B cell (primary cell): ENCODE measurements at regions of chr7 and their contacts with region 1.

Region 1: DNA sequence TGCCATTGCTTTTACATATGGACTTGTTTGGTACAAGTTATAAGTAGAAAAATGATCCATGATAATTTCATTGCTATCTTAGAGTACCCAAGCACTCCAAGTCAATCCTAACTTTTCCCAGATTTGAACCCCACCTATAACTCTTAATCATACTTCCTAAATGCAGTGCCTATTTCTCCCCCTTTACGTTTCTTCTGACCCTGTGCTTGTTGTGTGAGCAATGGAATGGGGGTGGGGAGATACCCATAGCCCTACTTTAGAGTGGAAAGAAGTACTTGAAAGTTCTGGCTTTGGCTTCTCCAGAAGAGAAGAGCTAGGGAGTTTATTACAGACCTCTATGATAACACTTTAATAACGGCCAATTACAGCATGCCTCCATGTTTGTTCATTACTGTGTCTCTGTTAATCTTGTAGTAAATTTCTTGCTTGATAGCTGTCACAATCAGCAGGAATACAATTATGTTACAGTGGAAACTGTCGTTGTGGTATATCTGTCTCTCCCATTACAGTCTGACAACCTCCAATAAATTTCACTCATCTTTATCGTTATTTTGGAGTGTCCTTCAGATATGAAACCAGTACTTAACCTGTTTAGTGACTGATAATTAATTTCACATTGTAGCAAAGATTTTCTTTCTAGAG is 34.0 kb downstream of the CNPY1 start:
- DNase-seq: no peak
- ATAC-seq: no peak
- H3K4me3 ChIP-seq: no peak overlapping the region
- H3K4me3 Mint-ChIP-seq: no peak overlapping the region
- H3K27ac ChIP-seq: no peak overlapping the region
- H3K27ac Mint-ChIP-seq: no peak overlapping the region
- H3K4me1 ChIP-seq: peaks cover 12 to 22% of the 10 kb centered on the region in 2 donors
- H3K4me1 Mint-ChIP-seq: peaks cover 11% of the 10 kb centered on the region
- H3K27me3 ChIP-seq: peaks cover 2 to 54% (median 47%) of the 10 kb centered on the region in 4 experiments
- H3K27me3 Mint-ChIP-seq: peaks cover 69% of the 10 kb centered on the region
- CTCF ChIP-seq: no peak

Region 2: DNA sequence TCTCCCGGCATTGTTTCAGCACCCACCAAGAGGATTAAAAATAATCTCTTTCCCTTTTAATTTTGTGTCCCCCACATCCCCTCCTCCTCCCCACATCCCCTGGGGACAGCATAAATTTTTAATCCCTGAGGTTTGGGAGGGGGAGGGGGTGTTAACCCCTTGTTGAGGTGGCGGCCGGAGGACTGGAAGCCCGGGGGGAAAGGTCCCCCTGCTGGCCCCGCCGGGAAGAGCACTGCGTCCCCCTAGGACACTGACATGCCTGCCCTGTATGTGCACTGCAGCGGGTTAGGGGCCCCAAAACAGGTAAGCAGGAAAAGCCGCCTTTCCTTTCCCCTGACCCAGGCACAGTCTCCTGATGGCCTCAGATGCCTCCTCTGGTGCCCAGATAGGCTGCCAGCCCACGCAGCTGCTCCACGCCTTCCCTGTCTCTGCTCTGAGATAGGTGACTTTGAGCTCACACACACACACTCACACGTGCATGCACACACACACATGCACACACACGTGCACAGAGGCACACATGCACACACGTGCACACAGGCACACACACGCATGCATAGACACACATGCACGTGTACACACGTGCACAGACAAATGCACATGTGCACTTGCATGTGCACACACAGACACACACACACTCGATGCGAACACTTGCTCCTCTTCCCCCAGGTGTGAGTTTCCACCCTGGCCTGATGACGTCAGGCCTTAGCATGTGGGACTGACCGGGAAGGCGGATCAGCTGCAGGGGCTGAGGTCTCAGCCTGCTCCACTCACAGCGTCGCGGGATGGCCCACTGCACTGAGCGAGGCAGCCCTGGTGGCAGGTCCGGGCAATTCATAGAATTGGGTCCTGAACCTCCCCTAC is 21.7 kb after region 1 on chr7:
- CTCF ChIA-PET with region 1: no interaction called
- POLR2A ChIA-PET with region 1: no interaction called
- intact Hi-C with region 1: loop called (anchors 2 kb)
- DNase-seq: peak; percentile 55
- ATAC-seq: peak; percentile 51
- H3K4me3 ChIP-seq: peak overlapping the region in 4 of 5 experiments; percentile 3 to 55 (median 35)
- H3K4me3 Mint-ChIP-seq: peak overlapping the region; percentile 70
- H3K27ac ChIP-seq: no peak overlapping the region
- H3K27ac Mint-ChIP-seq: no peak overlapping the region
- H3K4me1 ChIP-seq: peaks cover 13 to 18% of the 10 kb centered on the region in 2 donors
- H3K4me1 Mint-ChIP-seq: peaks cover 18% of the 10 kb centered on the region
- H3K27me3 ChIP-seq: peaks cover 0 to 67% (median 30%) of the 10 kb centered on the region in 4 experiments
- H3K27me3 Mint-ChIP-seq: peaks cover 70% of the 10 kb centered on the region
- CTCF ChIP-seq: peak; percentile 53